Natural killer cell (primary cell): ENCODE measurements at regions of chrX and their contacts with region 1.

Region 1: GRCh38 chrX:119516157-119516702 is 48.0 kb downstream of the SLC25A5 start:
- DNase-seq: peak; percentile 14 to 78
- ATAC-seq: peak; percentile 89 to 97 (median 93)
- H3K4me3 ChIP-seq: no peak overlapping the region
- H3K4me3 Mint-ChIP-seq: no peak overlapping the region
- H3K27ac ChIP-seq: no peak overlapping the region
- H3K27ac Mint-ChIP-seq: no peak overlapping the region
- H3K4me1 ChIP-seq: no peaks in the 10 kb centered on the region
- H3K4me1 Mint-ChIP-seq: peaks cover 6% of the 10 kb centered on the region in 2 donors
- H3K27me3 ChIP-seq: no peaks in the 10 kb centered on the region
- H3K27me3 Mint-ChIP-seq: no peaks in the 10 kb centered on the region
- CTCF ChIP-seq: peak; percentile 57

Region 2: DNA sequence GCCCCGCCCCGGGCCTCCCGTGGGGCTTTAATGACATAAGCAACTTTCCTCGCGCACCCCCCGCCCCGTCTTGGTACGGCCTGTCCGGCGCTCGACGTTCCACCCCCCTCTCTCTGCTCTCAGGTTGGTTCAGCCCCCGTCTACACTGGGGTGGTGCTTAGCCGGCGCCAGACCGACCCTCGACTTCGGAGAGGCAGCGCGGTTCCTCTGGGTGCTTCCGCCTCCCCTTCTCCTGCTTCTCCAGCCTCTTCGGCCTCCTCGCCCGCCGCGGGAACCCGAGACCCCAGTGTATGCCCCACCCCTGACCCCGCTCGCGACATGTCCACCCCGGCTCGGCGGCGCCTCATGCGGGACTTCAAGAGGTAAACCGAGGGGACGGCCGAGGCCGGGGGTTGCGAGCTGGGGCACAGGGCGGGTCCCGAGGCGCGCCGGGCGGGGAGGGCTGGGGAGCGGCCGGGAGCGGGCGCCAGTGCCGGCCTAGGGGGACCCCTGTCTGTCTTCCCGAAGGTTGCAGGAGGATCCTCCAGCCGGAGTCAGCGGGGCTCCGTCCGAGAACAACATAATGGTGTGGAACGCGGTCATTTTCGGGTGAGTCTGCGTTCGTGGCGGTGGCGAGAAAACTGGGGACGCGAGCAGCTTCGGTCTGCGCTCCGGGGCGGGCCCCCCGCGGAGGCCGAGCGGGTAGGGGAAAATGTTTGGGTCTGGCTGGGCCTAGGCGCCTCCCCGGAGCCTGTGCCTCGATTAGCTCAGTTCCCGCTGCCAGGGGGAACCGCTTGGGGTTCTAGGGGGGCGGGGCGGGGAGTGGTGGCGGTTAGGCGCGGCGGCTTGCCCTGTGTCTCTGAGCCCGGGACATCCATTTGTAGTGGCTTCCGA is 58.4 kb after region 1 on chrX and contains the start of gene UBE2A:
- intact Hi-C with region 1: loop called (anchors 2 kb)
- DNase-seq: peak; percentile 83 to 93
- ATAC-seq: peak; percentile 93 to 99 (median 93)
- H3K4me3 ChIP-seq: peak within 1 kb of the TSS; percentile 86
- H3K4me3 Mint-ChIP-seq: peak within 1 kb of the TSS; percentile 88
- H3K27ac ChIP-seq: peak within 1 kb of the TSS; percentile 84
- H3K27ac Mint-ChIP-seq: peak within 1 kb of the TSS; percentile 91 to 94
- H3K4me1 ChIP-seq: peaks cover 11% of the 10 kb centered on the region
- H3K4me1 Mint-ChIP-seq: peaks cover 0 to 14% of the 10 kb centered on the region in 2 donors
- H3K27me3 ChIP-seq: no peaks in the 10 kb centered on the region
- H3K27me3 Mint-ChIP-seq: peaks cover 0 to 7% of the 10 kb centered on the region in 2 donors
- CTCF ChIP-seq: no peak
- total RNA-seq, gene UBE2A: 88.4 to 125 (median 91.0) TPM

Region 3: DNA sequence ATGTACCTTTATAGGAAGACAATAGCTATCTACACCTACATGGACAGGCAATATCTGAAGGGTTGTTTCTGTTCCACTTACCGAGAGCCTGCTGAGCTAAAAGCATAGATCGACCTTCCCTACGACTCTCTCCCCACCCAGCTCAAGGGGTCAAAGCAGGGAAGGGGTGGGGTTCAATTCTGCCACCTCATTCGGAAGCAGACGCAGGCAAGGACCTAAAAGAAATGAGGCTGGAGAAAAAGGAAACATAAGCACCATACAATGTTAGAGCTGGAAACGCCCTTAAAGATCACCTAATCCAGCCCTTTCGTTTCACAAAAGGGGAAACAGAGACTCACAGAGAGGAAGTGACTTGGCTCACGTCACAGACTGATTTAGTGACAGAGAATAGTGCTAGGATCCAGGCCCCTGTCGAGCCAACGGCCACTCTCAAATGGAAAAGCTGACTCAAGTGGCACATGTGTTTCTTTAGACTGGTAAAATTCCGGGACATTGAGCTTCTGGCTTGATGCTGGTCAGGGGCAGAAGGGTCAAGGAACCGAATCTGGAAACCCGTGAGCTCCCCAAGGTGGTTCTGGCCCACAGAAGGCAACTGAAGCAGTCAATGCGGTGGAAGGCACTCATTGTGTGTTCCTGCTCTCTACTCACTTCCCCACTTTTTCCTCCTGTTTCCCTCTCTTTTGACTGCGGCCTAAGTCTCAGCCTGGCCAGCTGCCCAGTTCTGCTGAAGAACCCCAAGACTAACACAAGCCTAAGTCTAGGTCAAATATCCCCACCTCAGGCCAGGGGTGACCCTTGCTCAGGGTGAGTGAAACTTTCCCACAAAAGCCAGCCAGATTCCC is 169.2 kb after region 1 on chrX:
- intact Hi-C with region 1: no loop called
- DNase-seq: peak in 1 of 2 donors; percentile 75
- ATAC-seq: peak; percentile 32 to 73 (median 35)
- H3K4me3 ChIP-seq: peak overlapping the region; percentile 5
- H3K4me3 Mint-ChIP-seq: peak overlapping the region; percentile 82
- H3K27ac ChIP-seq: peak overlapping the region; percentile 100
- H3K27ac Mint-ChIP-seq: peak overlapping the region; percentile 96 to 98
- H3K4me1 ChIP-seq: peaks cover 94% of the 10 kb centered on the region
- H3K4me1 Mint-ChIP-seq: peaks cover 67 to 87% of the 10 kb centered on the region in 2 donors
- H3K27me3 ChIP-seq: no peaks in the 10 kb centered on the region
- H3K27me3 Mint-ChIP-seq: no peaks in the 10 kb centered on the region
- CTCF ChIP-seq: no peak

Region 4: GRCh38 chrX:119729408-119730201 is 213.4 kb after region 1 on chrX:
- intact Hi-C with region 1: loop called (anchors 1 kb)
- DNase-seq: peak; percentile 48 to 83
- ATAC-seq: peak; percentile 54 to 82 (median 69)
- H3K4me3 ChIP-seq: no peak overlapping the region
- H3K4me3 Mint-ChIP-seq: no peak overlapping the region
- H3K27ac ChIP-seq: no peak overlapping the region
- H3K27ac Mint-ChIP-seq: no peak overlapping the region
- H3K4me1 ChIP-seq: no peaks in the 10 kb centered on the region
- H3K4me1 Mint-ChIP-seq: peaks cover 6% of the 10 kb centered on the region in 2 donors
- H3K27me3 ChIP-seq: no peaks in the 10 kb centered on the region
- H3K27me3 Mint-ChIP-seq: no peaks in the 10 kb centered on the region
- CTCF ChIP-seq: peak; percentile 56

Region 5: DNA sequence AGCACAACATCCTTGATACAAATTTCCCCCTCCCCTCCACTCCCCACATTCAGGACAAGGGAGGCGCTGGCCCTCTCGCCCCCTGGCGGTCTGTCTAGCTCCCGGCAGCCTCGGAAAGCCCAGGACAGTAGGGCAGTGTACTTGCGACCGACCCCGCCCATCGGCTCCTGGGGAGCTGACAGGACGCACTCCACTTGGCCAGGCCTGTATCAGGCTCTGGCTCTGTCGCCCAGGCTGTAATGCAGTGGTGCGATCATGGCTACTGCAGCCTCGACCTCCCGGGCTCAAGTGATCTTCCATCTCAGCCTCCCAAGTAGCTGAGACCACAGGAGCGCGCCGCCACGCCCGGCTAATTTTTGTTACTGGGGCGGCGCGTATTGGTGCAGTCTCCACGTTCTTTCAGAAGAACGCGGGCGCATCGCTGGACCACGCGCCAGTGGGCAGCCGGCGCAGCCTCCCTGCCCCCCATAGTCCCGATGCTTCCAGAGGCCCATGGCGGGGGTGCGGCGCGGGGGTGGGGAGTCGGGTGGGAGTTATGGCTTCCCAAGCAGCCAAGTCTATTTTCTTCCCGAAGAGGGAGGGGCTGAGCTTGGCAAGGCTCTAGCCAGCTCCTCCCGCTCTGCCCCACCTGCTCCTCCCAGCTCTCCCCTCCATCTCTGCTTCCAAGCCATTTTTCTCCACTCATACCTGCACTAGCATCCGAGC is 371.6 kb after region 1 on chrX:
- intact Hi-C with region 1: loop called (anchors 5 kb)
- DNase-seq: peak; percentile 38 to 74
- ATAC-seq: peak; percentile 78 to 93 (median 87)
- H3K4me3 ChIP-seq: peak overlapping the region; percentile 24
- H3K4me3 Mint-ChIP-seq: peak overlapping the region; percentile 25
- H3K27ac ChIP-seq: no peak overlapping the region
- H3K27ac Mint-ChIP-seq: no peak overlapping the region
- H3K4me1 ChIP-seq: peaks cover 18% of the 10 kb centered on the region
- H3K4me1 Mint-ChIP-seq: peaks cover 6% of the 10 kb centered on the region in 2 donors
- H3K27me3 ChIP-seq: no peaks in the 10 kb centered on the region
- H3K27me3 Mint-ChIP-seq: no peaks in the 10 kb centered on the region
- CTCF ChIP-seq: peak; percentile 51